ENCODE measurements at regions of chr11 and their contacts with region 1.

Region 1: DNA sequence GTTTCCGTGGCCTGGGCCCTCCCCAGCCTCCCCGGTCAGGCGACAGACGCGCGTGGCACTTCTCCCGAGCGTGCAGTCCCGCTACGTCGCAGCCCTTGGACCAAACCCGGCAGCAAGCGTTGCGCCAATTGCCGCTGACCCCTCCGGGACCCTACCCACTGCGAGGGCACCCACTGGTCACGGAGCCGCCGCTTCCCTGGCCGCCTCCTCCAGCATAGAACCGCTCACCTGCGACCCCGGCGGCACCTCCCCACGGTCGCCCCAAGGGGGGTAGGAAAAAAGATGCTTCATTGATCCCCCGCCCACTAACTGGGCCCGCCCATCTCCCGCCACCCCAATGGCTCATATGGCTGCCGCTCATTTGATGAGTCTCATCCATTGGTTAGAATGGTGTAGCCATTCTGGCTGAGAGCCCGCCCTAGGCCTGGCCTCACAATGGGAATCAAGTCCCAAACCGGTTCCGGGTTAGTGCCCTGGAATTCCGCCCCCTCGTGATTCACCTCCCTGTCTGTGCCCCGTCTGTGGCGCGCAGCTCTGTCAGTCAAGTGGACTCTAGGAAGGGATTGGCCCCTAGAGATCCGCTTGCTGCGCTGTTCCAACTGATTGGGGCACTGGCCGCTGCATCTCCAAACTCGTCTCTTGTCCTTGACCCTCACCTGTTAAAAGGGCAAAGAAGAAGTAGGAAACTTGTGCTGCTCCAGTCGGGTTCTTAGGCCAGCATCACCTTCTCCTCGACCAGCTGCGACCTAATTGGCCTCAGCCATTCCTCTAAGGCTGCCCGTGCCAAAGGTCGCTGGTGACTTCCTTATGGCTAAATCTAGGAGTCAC is at the start of gene MSANTD4:
- DNase-seq: peak; percentile 99
- ATAC-seq: peak; percentile 99
- H3K4me3 ChIP-seq: peak within 1 kb of the TSS; percentile 77 to 90
- H3K27ac ChIP-seq: peak within 1 kb of the TSS; percentile 97
- H3K4me1 ChIP-seq: peaks cover 15% of the 10 kb centered on the region; the same call in 1 of the 2 replicates
- H3K27me3 ChIP-seq: no peaks in the 10 kb centered on the region
- CTCF ChIP-seq: no peak
- total RNA-seq, gene MSANTD4: 19.6 TPM

Region 2: GRCh38 chr11:106076919-106077608 is 54.9 kb after region 1 on chr11 and contains the start of gene KBTBD3:
- CTCF ChIA-PET with region 1: no interaction called
- POLR2A ChIA-PET with region 1: interaction called, 6 read pairs
- in situ Hi-C with region 1: no loop called
- intact Hi-C with region 1: loop called (anchors 2 kb)
- DNase-seq: peak; percentile 99
- ATAC-seq: peak; percentile 98
- H3K4me3 ChIP-seq: peak within 1 kb of the TSS; percentile 90 to 98
- H3K27ac ChIP-seq: peak within 1 kb of the TSS; percentile 87
- H3K4me1 ChIP-seq: peaks cover 16% of the 10 kb centered on the region
- H3K27me3 ChIP-seq: no peaks in the 10 kb centered on the region
- CTCF ChIP-seq: peak; percentile 82
- total RNA-seq, gene KBTBD3: 5.7 TPM

Region 3: GRCh38 chr11:106087815-106088435 is 65.7 kb after region 1 on chr11:
- CTCF ChIA-PET with region 1: no interaction called
- POLR2A ChIA-PET with region 1: no interaction called
- in situ Hi-C with region 1: no loop called
- intact Hi-C with region 1: no loop called
- DNase-seq: peak; percentile 32
- ATAC-seq: 0 out of 2 replicates have a peak, but pooled peaks have one; percentile 72
- H3K4me3 ChIP-seq: no peak overlapping the region
- H3K27ac ChIP-seq: peak overlapping the region; percentile 29; the same call in 1 of the 2 replicates
- H3K4me1 ChIP-seq: peaks cover 20% of the 10 kb centered on the region
- H3K27me3 ChIP-seq: no peaks in the 10 kb centered on the region
- CTCF ChIP-seq: peak; percentile 92; the same call in 1 of the 2 replicates

Region 4: DNA sequence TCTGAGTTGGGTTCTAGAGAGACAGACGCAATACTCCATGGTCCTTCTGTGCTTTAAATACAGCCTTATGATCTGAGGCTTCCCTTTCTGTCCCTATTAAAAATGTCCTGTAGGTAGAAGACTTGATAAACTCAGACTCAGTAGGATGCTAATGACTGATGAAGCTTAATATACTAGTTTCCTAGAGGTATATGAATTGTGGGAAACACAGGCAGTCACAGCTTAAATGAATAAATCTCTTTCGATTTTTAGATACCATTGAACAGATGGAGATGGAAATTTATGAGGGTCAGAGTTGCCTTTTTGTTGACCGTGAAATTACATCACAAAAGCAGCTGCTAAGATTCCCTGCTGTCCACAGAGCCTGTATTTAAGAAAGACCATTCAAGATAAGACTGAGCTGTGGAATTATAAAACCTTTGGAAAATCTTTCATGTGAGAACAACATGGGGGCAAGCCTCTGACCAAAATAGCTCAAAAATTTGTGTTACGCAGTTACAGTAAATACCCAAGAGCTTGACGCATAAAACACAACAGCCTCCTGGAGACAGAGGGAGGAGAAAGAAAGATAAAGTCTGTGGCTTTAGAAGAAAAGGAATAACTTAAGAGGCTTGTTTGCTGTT is 227.5 kb after region 1 on chr11:
- CTCF ChIA-PET with region 1: no interaction called
- POLR2A ChIA-PET with region 1: no interaction called
- in situ Hi-C with region 1: no loop called
- intact Hi-C with region 1: no loop called
- DNase-seq: no peak
- ATAC-seq: no peak
- H3K4me3 ChIP-seq: no peak overlapping the region
- H3K27ac ChIP-seq: no peak overlapping the region
- H3K4me1 ChIP-seq: no peaks in the 10 kb centered on the region
- H3K27me3 ChIP-seq: no peaks in the 10 kb centered on the region
- CTCF ChIP-seq: no peak

Measured in Panc1 (cell line).